A673 (cell line): ENCODE measurements at regions of chr10 and their contacts with region 1.

Region 1: DNA sequence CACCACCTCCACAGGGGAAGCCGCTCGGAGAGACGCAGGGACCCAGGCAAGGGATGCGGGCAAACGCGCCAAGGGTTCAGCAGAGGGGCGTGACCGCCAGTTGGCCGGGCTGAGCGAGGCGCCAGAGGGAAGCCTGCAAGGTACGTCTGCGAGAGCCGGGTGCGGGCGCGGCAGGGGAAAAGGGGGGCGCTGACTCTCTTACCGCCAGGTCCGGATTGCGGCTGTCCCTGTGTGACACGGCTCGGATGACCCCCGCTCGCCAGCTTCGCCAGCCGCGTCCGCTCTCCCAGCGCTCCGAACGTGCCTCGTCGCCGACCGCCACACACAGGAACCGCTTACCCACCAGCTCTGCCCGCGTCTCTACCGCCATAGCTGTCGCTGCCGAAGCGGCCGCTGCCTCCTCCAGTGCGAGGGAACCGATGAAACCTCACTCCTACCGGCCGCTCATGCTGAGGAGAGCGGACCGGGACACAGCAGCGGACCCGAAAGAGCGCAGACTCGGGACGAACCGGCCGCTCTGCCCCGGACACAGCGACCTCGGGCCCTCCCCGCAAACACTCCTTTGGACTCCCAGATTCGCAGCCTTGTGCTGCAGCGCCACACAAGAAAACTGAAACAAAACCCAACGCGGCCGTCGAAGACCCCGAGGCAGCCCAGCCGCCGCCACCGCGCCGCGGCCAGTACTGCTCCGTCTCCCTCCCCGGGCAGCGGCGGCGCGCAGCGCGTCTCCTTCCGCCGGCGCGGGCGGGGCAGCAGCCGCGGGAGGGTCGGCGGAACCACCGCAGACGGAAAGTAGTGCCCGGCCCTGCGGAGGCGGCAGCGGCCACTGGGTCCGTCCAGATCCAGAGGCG is at the start of gene JMJD1C:
- DNase-seq: peak; percentile 87
- H3K4me3 ChIP-seq: peak within 1 kb of the TSS; percentile 87
- H3K27ac ChIP-seq: peak within 1 kb of the TSS; percentile 84
- H3K4me1 ChIP-seq: peaks cover 36% of the 10 kb centered on the region
- H3K27me3 ChIP-seq: no peaks in the 10 kb centered on the region
- CTCF ChIP-seq: no peak
- total RNA-seq, gene JMJD1C: 68.2 and 71.4 TPM in 2 replicates

Region 2: GRCh38 chr10:63206997-63207811 is 258.3 kb before region 1 on chr10:
- CTCF ChIA-PET with region 1: no interaction called
- POLR2A ChIA-PET with region 1: no interaction called
- intact Hi-C with region 1: loop called (anchors 10 kb)
- DNase-seq: peak; percentile 88
- H3K4me3 ChIP-seq: peak overlapping the region; percentile 16
- H3K27ac ChIP-seq: peak overlapping the region; percentile 79
- H3K4me1 ChIP-seq: peaks cover 76% of the 10 kb centered on the region
- H3K27me3 ChIP-seq: no peaks in the 10 kb centered on the region
- CTCF ChIP-seq: no peak

Region 3: GRCh38 chr10:63521416-63522276 is 56.1 kb after region 1 on chr10:
- CTCF ChIA-PET with region 1: no interaction called
- POLR2A ChIA-PET with region 1: no interaction called
- intact Hi-C with region 1: loop called (anchors 2 kb)
- DNase-seq: peak; percentile 89
- H3K4me3 ChIP-seq: peak overlapping the region; percentile 63
- H3K27ac ChIP-seq: peak overlapping the region; percentile 97
- H3K4me1 ChIP-seq: peaks cover 45% of the 10 kb centered on the region
- H3K27me3 ChIP-seq: no peaks in the 10 kb centered on the region
- CTCF ChIP-seq: no peak

Region 4: GRCh38 chr10:63711867-63712716 is 246.6 kb after region 1 on chr10:
- CTCF ChIA-PET with region 1: no interaction called
- POLR2A ChIA-PET with region 1: no interaction called
- intact Hi-C with region 1: loop called (anchors 5 kb)
- DNase-seq: peak; percentile 93
- H3K4me3 ChIP-seq: no peak overlapping the region
- H3K27ac ChIP-seq: peak overlapping the region; percentile 79
- H3K4me1 ChIP-seq: peaks cover 58% of the 10 kb centered on the region
- H3K27me3 ChIP-seq: no peaks in the 10 kb centered on the region
- CTCF ChIP-seq: no peak

Region 5: DNA sequence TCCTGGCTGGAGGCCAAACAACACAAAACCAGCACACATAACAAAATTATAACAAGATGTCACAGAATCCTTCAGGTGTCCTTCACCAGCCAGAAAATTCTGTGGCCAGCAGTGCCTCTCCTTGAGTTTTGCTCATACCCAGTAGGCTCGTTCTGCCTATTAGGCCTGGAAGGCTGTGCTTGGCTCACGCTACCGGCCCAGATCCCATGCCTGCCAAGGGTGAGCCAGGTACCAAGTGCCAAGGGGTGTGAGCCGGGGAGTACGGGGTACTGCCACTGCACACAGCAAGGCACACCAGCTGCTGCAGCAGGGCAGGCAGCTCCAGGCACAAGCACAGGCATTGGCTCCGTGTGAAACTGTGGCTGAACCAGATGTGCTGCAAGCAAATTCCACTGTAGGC is 1617.7 kb after region 1 on chr10:
- CTCF ChIA-PET with region 1: no interaction called
- POLR2A ChIA-PET with region 1: no interaction called
- intact Hi-C with region 1: no loop called
- DNase-seq: no peak
- H3K4me3 ChIP-seq: no peak overlapping the region
- H3K27ac ChIP-seq: no peak overlapping the region
- H3K4me1 ChIP-seq: no peaks in the 10 kb centered on the region
- H3K27me3 ChIP-seq: no peaks in the 10 kb centered on the region
- CTCF ChIP-seq: no peak